ENCODE measurements at regions of chr9 and their contacts with region 1.

Region 1: DNA sequence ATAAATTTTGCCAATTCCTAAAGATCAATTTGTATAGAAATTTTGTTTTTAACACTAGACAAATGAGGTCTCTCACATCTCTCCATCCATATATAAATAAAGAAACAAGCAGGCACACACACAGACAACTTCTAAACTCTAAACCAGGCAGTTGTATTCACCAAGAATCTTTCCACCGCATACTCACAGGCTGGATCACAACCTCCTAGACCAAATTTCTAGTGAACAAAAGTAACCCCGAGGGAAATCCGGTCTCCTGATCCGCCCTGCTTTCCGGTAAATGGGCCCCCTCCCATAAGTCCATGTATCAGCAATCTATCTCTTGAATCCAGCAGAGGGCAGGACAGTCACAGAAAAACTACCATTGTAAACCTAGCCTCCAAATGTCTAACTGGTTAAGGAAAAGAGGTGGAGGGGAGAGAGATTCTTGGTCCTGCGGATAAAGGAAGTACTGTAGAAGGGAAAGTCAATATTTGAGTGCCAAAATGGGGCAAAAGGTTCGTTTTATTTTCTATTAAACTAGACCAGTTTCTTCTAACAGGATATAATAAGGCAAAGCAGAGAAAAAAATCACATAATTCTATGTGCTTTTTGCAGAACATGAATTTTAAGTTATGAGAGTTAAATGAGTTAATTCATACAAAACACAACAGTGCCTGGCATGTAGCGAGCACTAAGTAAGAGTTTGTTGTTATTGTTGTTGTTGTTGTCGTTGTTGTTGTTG is 4.8 kb upstream of the SMU1 start:
- DNase-seq: no peak
- H3K4me3 ChIP-seq: no peak overlapping the region
- H3K27ac ChIP-seq: peak overlapping the region; percentile 80
- H3K4me1 ChIP-seq: no peaks in the 10 kb centered on the region
- H3K27me3 ChIP-seq: no peaks in the 10 kb centered on the region
- CTCF ChIP-seq: peak; percentile 68 to 97 (median 79)
- POLR2A ChIP-seq: no peak

Region 2: GRCh38 chr9:33225319-33226149 is 144.2 kb after region 1 on chr9:
- intact Hi-C with region 1: loop called (anchors 2 kb)
- DNase-seq: no peak
- H3K4me3 ChIP-seq: no peak overlapping the region
- H3K27ac ChIP-seq: no peak overlapping the region
- H3K4me1 ChIP-seq: peaks cover 20% of the 10 kb centered on the region
- H3K27me3 ChIP-seq: no peaks in the 10 kb centered on the region
- CTCF ChIP-seq: peak; percentile 70 to 94 (median 79)
- POLR2A ChIP-seq: no peak